Thyroid gland (tissue), 4 donors: ENCODE measurements at regions of chr4 and their contacts with region 1.

Region 1: GRCh38 chr4:173415885-173416653 is 17.2 kb upstream of the SCRG1 start:
- DNase-seq: peak in 1 of 2 donors; percentile 7
- H3K4me3 ChIP-seq: no peak overlapping the region
- H3K27ac ChIP-seq: no peak overlapping the region
- H3K4me1 ChIP-seq: no peaks in the 10 kb centered on the region
- H3K27me3 ChIP-seq: no peaks in the 10 kb centered on the region
- CTCF ChIP-seq: no peak
- POLR2A ChIP-seq: no peak

Region 2: DNA sequence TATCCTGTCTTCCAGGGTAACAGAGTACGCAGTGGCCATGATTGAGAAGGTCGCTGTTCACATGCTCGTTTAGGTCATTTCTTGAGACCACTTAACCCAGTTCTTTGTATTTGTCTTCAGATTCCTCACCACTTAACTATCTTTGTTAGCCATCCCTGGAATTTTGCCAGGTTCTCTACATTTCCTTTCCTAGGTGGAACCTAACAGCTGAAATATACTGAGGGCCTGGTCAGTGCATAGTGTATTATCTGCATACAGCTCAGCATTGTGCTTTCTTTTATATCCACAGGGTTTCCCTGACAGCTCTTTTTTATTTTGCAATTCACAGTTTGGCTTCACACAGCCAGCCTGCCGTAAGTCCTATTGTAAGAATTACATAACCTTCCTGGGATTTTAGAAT is 396.4 kb before region 1 on chr4:
- intact Hi-C with region 1: loop called (anchors 5 kb)
- DNase-seq: no peak
- H3K4me3 ChIP-seq: no peak overlapping the region
- H3K27ac ChIP-seq: no peak overlapping the region
- H3K4me1 ChIP-seq: no peaks in the 10 kb centered on the region
- H3K27me3 ChIP-seq: no peaks in the 10 kb centered on the region
- CTCF ChIP-seq: no peak
- POLR2A ChIP-seq: no peak

Region 3: GRCh38 chr4:173318648-173319211 is 97.3 kb before region 1 on chr4:
- intact Hi-C with region 1: loop called (anchors 2 kb)
- DNase-seq: no peak
- H3K4me3 ChIP-seq: no peak overlapping the region
- H3K27ac ChIP-seq: no peak overlapping the region
- H3K4me1 ChIP-seq: no peaks in the 10 kb centered on the region
- H3K27me3 ChIP-seq: no peaks in the 10 kb centered on the region
- CTCF ChIP-seq: peak in 3 of 6 experiments; percentile 28 to 53 (median 52)
- POLR2A ChIP-seq: no peak

Region 4: DNA sequence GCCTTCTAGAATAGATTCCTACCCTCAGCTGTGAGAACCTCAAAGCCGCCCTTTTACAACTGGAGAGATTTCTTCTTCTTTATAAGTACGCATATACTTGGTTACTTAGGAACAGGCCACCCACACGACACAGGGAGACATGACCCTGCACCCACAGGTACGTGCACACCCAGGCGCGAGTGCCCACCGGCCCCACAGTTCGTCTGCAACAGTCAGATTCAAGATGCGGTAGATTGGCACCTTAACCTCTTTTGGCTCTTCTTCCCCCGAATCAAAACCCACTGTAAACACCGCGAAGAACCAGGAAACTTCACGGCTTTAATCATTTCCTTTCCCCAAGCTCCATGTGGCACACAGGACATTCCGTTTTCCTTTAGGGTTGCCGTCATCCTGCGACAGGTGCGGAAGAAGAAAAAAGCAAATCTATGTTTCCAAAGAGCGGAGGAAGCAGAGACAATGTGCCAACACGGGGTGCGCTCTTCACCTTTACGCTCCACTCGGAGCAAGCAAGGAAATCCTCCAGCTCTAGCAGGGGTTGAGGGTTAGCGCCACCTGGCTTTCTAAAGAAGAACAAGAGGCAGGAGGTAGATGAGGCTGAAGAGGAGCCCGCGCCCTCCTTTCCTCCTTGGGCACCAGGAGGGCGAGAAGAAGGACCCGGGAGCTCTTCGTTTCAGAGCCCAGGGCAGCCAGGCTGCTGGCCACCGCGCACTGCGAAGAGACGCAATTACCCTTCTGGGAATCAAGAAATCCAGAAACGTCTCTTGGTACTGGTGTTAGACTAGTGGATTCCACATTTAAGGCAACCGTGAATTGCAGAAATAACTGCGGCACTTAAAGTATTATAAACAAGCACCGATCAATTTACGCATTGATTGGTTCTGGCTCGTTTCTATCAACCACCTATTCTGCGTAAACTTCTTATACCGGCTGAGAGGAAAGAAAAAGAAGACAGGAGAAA is 78.2 kb after region 1 on chr4:
- intact Hi-C with region 1: loop called (anchors 5 kb)
- DNase-seq: peak; percentile 65 to 68
- H3K4me3 ChIP-seq: peak overlapping the region in 2 of 3 donors; percentile 20 to 22
- H3K27ac ChIP-seq: no peak overlapping the region
- H3K4me1 ChIP-seq: peaks cover 0 to 11% of the 10 kb centered on the region in 2 donors
- H3K27me3 ChIP-seq: no peaks in the 10 kb centered on the region
- CTCF ChIP-seq: peak in 5 of 6 experiments; percentile 42 to 78 (median 72)
- POLR2A ChIP-seq: no peak